ENCODE measurements at regions of chr1 and their contacts with region 1.

Region 1: DNA sequence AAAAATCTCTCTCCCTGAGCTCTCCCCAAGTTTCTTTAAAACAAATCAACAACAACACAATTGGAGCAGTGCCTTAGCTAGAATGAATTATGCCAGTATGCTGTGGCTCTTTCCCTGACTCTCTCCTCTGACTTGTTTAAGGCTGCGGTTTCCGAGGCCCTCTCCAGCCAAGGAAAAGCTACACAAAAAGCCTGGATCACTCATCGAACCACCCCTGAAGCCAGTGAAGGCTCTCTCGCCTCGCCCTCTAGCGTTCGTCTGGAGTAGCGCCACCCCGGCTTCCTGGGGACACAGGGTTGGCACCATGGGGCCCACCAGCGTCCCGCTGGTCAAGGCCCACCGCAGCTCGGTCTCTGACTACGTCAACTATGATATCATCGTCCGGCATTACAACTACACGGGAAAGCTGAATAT is 1.9 kb downstream of the S1PR1 start:
- DNase-seq: peak; percentile 75 to 83 (median 78)
- ATAC-seq: peak; percentile 91
- H3K4me3 ChIP-seq: no peak overlapping the region
- H3K27ac ChIP-seq: no peak overlapping the region
- H3K4me1 ChIP-seq: peaks cover 15 to 27% of the 10 kb centered on the region in 2 experiments; a peak in 4 of 5 replicates
- H3K27me3 ChIP-seq: peaks cover 0 to 23% of the 10 kb centered on the region in 2 experiments; a peak in 4 of 5 replicates
- CTCF ChIP-seq: peak; percentile 81 to 93 (median 82)
- EP300 ChIP-seq: no peak
- POLR2A ChIP-seq: no peak
- RAD21 ChIP-seq: peak; percentile 87 to 92

Region 2: DNA sequence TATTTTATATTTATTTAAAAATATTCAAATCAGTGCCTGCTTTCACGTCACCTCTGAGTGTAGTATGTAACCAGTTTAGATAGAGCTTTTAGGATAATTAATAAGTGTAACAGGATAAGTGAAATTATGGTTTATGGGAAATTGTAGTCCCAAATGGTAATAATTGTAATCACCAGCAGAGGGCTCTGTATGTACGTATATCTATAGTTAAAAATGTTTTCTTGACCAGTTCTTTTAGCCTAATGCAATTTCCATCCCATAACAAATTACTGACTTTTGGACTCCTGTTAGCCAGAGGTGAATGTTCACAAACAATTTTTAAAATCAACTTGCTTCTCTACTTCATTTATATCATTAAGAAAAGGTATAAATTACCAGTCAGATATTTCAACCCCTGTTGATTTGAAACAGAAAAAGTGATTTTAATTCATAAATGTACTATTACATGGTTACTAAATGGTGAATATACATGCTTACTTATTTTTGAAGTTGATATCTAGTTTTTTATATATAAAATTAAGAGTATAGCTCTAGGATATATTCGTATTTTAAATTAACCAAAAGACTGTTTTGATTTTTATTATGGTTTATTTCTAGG is 317.5 kb before region 1 on chr1:
- CTCF ChIA-PET with region 1: interaction called, 3 read pairs
- POLR2A ChIA-PET with region 1: no interaction called
- in situ Hi-C with region 1: no loop called
- intact Hi-C with region 1: loop called (anchors 1 kb)
- DNase-seq: peak; percentile 16 to 60 (median 22)
- ATAC-seq: peak; percentile 44; the same call in 1 of the 3 replicates
- H3K4me3 ChIP-seq: no peak overlapping the region
- H3K27ac ChIP-seq: no peak overlapping the region
- H3K4me1 ChIP-seq: no peaks in the 10 kb centered on the region
- H3K27me3 ChIP-seq: no peaks in the 10 kb centered on the region
- CTCF ChIP-seq: peak in 2 of 3 experiments; percentile 31 to 79; a peak in 3 of 6 replicates
- EP300 ChIP-seq: no peak
- POLR2A ChIP-seq: no peak
- RAD21 ChIP-seq: peak; percentile 79 to 84

Region 3: GRCh38 chr1:101025657-101026504 is 212.8 kb before region 1 on chr1 and contains the start of gene DPH5:
- CTCF ChIA-PET with region 1: no interaction called
- POLR2A ChIA-PET with region 1: no interaction called
- in situ Hi-C with region 1: no loop called
- intact Hi-C with region 1: loop called (anchors 5 kb)
- DNase-seq: peak; percentile 88 to 94 (median 92)
- ATAC-seq: peak; percentile 92
- H3K4me3 ChIP-seq: peak within 1 kb of the TSS; percentile 69
- H3K27ac ChIP-seq: peak within 1 kb of the TSS; percentile 87
- H3K4me1 ChIP-seq: peaks cover 4 to 8% of the 10 kb centered on the region in 2 experiments; a peak in 2 of 5 replicates
- H3K27me3 ChIP-seq: no peaks in the 10 kb centered on the region
- CTCF ChIP-seq: no peak
- EP300 ChIP-seq: no peak
- POLR2A ChIP-seq: peak; percentile 98
- RAD21 ChIP-seq: peak in 1 of 2 experiments; percentile 3; a peak in 2 of 4 replicates
- polyA plus RNA-seq, gene DPH5: 121 to 152 TPM

Region 4: GRCh38 chr1:101128211-101128727 is 110.4 kb before region 1 on chr1:
- CTCF ChIA-PET with region 1: no interaction called
- POLR2A ChIA-PET with region 1: no interaction called
- in situ Hi-C with region 1: no loop called
- intact Hi-C with region 1: loop called (anchors 2 kb)
- DNase-seq: peak; percentile 68 to 88 (median 77)
- ATAC-seq: peak; percentile 96
- H3K4me3 ChIP-seq: no peak overlapping the region
- H3K27ac ChIP-seq: peak overlapping the region; percentile 72
- H3K4me1 ChIP-seq: peaks cover 0 to 29% of the 10 kb centered on the region in 2 experiments; a peak in 4 of 5 replicates
- H3K27me3 ChIP-seq: no peaks in the 10 kb centered on the region
- CTCF ChIP-seq: no peak; a peak in 1 of 6 replicates
- EP300 ChIP-seq: peak; percentile 92
- POLR2A ChIP-seq: no peak
- RAD21 ChIP-seq: peak in 1 of 2 experiments; percentile 8; a peak in 1 of 4 replicates

Region 5: GRCh38 chr1:101190441-101190840 is 48.2 kb before region 1 on chr1:
- CTCF ChIA-PET with region 1: no interaction called
- POLR2A ChIA-PET with region 1: interaction called, 3 read pairs
- in situ Hi-C with region 1: no loop called
- intact Hi-C with region 1: loop called (anchors 5 kb)
- DNase-seq: no peak
- ATAC-seq: no peak
- H3K4me3 ChIP-seq: no peak overlapping the region
- H3K27ac ChIP-seq: no peak overlapping the region
- H3K4me1 ChIP-seq: no peaks in the 10 kb centered on the region; a peak in 2 of 5 replicates
- H3K27me3 ChIP-seq: no peaks in the 10 kb centered on the region
- CTCF ChIP-seq: no peak
- EP300 ChIP-seq: no peak
- POLR2A ChIP-seq: no peak
- RAD21 ChIP-seq: no peak

Region 6: GRCh38 chr1:101282314-101283038 is 43.8 kb after region 1 on chr1:
- CTCF ChIA-PET with region 1: no interaction called
- POLR2A ChIA-PET with region 1: no interaction called
- in situ Hi-C with region 1: loop called (anchors 5 kb)
- intact Hi-C with region 1: loop called (anchors 1 kb)
- DNase-seq: no peak
- ATAC-seq: no peak
- H3K4me3 ChIP-seq: no peak overlapping the region
- H3K27ac ChIP-seq: no peak overlapping the region
- H3K4me1 ChIP-seq: peaks cover 9 to 33% of the 10 kb centered on the region in 2 experiments
- H3K27me3 ChIP-seq: no peaks in the 10 kb centered on the region; a peak in 1 of 5 replicates
- CTCF ChIP-seq: no peak
- EP300 ChIP-seq: no peak
- POLR2A ChIP-seq: no peak
- RAD21 ChIP-seq: no peak

Region 7: GRCh38 chr1:101288491-101288944 is 49.8 kb after region 1 on chr1:
- CTCF ChIA-PET with region 1: interaction called, 3 read pairs
- POLR2A ChIA-PET with region 1: no interaction called
- in situ Hi-C with region 1: loop called (anchors 5 kb)
- intact Hi-C with region 1: loop called (anchors 1 kb)
- DNase-seq: peak; percentile 58 to 81 (median 65)
- ATAC-seq: peak; percentile 88
- H3K4me3 ChIP-seq: no peak overlapping the region
- H3K27ac ChIP-seq: no peak overlapping the region
- H3K4me1 ChIP-seq: peaks cover 5 to 14% of the 10 kb centered on the region in 2 experiments
- H3K27me3 ChIP-seq: no peaks in the 10 kb centered on the region; a peak in 1 of 5 replicates
- CTCF ChIP-seq: peak; percentile 67 to 90 (median 82)
- EP300 ChIP-seq: no peak
- POLR2A ChIP-seq: no peak
- RAD21 ChIP-seq: peak; percentile 97 to 98